Colonic mucosa (tissue), 4 donors: ENCODE measurements at regions of chr16 and their contacts with region 1.

Region 1: DNA sequence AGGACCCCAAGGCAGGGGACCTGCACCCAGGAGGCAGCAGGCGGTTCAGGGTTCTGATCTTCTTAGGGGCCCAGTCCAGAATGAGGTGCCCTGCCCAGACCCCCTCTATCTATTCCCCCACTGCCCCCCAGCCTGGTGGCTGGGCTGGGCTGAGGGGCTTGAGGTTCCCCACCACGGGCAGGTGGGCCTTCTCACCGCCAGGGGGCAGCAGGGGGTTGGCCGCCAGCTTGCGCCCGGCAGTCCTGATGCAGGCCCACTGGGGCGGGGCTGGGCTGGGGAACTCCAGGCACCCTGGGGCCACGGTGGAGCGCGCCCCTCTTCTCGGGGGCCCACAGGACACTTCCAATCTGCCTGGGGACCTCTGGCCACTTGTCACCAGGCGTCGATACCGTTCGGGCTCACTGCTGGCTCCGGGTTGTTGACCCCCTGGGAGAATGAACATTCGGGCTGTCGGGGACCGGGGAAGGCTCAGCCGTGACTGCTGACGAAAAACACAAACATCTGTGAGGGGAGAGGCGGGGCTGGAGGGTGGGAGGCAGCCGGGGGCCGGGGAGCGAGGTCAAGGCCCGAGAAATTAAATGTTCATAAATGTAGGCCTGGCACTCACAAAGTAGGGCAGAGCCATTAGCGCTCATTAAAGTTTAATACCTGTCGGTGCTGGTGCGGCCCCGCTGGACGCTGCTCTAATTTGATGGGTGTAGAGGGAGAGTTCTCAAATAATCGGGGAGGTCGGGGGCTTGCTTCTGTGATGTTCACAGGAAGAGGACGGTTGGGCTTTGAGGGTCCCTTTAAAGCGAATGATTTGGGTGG is 219.2 kb upstream of the GSE1 start:
- DNase-seq: peak; percentile 72
- H3K4me3 ChIP-seq: no peak overlapping the region
- H3K27ac ChIP-seq: no peak overlapping the region
- H3K4me1 ChIP-seq: no peaks in the 10 kb centered on the region
- H3K27me3 ChIP-seq: no peaks in the 10 kb centered on the region
- CTCF ChIP-seq: peak; percentile 81

Region 2: DNA sequence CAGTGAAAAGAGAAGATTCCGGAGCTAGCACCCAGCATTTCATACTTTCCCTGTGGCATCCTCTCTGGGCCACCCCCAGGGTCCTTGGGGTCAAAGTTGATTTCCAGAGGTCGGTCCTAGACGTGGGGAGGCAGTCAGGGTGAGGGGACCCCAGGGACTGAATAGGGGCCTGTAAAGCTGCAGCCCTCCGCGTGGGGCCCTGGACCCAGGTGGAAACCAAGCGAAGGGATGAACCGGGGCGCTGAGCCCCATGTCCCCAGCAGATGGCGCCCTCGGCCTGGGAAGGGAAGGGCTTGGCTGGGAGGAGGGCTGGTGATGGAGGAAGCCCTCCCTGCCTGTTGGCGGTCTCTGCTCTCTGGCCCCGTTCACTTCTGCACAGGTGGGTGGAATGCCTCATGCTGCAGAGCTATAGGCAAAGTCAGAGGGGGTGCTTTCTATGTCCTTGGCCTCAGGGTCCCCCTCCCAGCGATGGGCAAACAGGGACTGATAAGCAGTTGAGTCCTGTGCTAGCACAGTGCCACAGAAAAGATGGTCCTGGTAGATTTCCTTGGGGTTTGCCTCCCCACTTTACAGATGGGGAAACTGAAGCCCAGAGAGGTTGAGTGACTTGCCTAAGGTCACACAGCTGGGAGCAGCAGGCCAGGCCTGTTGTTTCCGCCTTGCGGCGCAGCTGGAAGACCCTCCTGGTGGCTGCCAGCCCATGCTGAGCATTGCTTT is 118.2 kb before region 1 on chr16:
- intact Hi-C with region 1: no loop called
- DNase-seq: peak; percentile 77
- H3K4me3 ChIP-seq: no peak overlapping the region
- H3K27ac ChIP-seq: no peak overlapping the region
- H3K4me1 ChIP-seq: no peaks in the 10 kb centered on the region
- H3K27me3 ChIP-seq: no peaks in the 10 kb centered on the region
- CTCF ChIP-seq: peak; percentile 90

Region 3: GRCh38 chr16:85316321-85316919 is 77.5 kb before region 1 on chr16:
- intact Hi-C with region 1: loop called (anchors 5 kb)
- DNase-seq: peak; percentile 67
- H3K4me3 ChIP-seq: no peak overlapping the region
- H3K27ac ChIP-seq: no peak overlapping the region
- H3K4me1 ChIP-seq: no peaks in the 10 kb centered on the region
- H3K27me3 ChIP-seq: no peaks in the 10 kb centered on the region
- CTCF ChIP-seq: peak; percentile 90